ENCODE measurements at regions of chr3 and their contacts with region 1.

Region 1: GRCh38 chr3:140216249-140216648 is 281.3 kb downstream of the CLSTN2 start:
- DNase-seq: no peak

Region 2: DNA sequence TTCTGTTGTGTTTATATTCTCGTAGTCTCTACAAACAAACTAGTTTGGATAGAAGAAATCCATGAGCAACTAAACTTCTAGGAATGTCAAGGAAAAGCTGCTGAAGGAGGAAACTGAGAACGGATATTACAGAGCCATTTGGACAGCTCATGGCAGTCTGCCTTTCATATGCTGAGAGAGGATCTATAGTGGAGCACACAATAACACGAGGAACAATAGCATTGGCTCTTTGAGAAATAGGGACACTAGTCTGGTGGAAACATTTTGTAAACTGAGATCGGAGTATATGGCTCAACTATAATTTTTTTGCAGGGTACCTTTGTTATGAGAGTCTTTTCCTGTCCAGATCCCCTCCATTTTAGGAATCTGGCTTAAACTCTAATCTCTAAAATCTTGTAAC is 80.8 kb before region 1 on chr3:
- intact Hi-C with region 1: loop called (anchors 5 kb)
- DNase-seq: no peak

Region 3: DNA sequence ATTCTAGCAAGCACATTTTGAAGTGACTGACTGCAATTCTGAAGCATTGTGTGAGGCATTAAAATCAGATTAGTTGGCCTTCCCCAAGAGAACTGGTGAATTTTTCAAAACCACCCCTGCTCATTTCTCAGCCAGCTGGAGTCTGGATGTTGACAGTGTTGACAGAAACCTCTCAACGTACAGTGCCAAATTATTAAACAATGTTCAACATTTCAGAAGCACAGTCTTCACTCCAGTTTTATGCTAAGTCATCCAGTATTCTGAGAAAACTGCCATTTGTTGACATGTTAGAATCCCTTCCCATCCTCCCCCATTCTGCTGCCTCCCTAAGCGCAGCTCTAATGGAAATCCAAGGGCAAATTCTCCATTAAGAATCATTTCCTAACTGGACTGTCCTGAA is 92.3 kb after region 1 on chr3:
- intact Hi-C with region 1: no loop called
- DNase-seq: no peak